OCI-LY7 (cell line): ENCODE measurements at regions of chr10 and their contacts with region 1.

Region 1: GRCh38 chr10:99845837-99846382 is 63.5 kb downstream of the ABCC2 start:
- DNase-seq: peak; percentile 90
- H3K4me3 ChIP-seq: no peak overlapping the region
- H3K27ac ChIP-seq: no peak overlapping the region
- H3K4me1 ChIP-seq: peaks cover 5% of the 10 kb centered on the region
- CTCF ChIP-seq: peak; percentile 98

Region 2: DNA sequence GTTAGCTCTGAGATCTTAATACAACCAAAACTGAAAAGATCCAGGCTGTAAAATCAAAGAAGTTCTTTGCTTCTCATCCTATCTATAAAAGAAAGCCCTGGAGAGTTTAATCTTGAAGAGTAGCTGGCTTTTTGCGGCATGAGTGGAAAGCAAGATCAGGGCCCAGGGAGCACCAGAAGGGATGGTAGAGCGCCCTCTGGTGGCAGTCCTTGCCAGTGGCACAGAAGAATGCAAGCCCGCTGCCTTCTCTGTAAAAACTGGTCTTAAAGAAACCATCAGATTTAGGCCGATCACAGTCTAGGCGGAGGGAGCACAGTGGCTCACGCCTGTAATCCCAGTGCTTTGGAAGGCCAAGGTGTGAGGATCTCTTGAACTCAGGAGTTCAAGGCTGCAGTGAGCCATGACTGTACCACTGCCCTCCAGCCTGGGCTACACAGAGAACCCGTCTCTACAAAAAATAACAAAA is 200.1 kb after region 1 on chr10:
- CTCF ChIA-PET with region 1: interaction called, 7 read pairs
- POLR2A ChIA-PET with region 1: interaction called, 3 read pairs
- intact Hi-C with region 1: loop called (anchors 1 kb)
- DNase-seq: peak; percentile 92
- H3K4me3 ChIP-seq: no peak overlapping the region
- H3K27ac ChIP-seq: no peak overlapping the region
- H3K4me1 ChIP-seq: peaks cover 49% of the 10 kb centered on the region
- CTCF ChIP-seq: peak; percentile 97

Region 3: DNA sequence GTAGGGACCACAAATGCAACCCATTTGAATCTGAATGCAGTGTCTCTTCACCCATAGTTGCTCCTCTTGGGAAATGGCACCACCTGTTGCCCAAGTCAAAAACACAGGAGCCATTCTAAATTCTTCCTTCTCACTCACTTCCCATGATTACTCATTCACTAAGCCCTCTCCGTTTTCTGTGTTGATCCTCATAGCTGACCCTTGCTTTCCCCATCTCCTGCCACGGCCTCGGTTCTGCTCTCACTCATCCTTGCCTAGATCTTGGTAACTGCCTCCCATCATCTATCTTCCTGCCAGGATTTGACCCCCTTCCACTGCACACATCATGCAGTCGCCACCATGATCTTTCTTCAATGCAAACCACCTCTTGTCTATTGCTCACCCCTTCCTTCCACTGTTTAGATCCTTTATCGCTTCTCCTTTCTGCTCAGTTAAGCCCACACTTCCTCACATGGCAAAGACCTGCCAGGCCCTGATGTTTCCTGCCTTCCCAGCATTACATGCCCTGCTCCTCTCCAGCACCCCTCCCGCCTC is 254.8 kb after region 1 on chr10:
- CTCF ChIA-PET with region 1: no interaction called
- POLR2A ChIA-PET with region 1: no interaction called
- intact Hi-C with region 1: loop called (anchors 1 kb)
- DNase-seq: peak; percentile 22
- H3K4me3 ChIP-seq: no peak overlapping the region
- H3K27ac ChIP-seq: no peak overlapping the region
- H3K4me1 ChIP-seq: no peaks in the 10 kb centered on the region
- CTCF ChIP-seq: peak; percentile 71

Region 4: GRCh38 chr10:100239851-100240250 is 393.9 kb after region 1 on chr10:
- CTCF ChIA-PET with region 1: no interaction called
- POLR2A ChIA-PET with region 1: no interaction called
- intact Hi-C with region 1: loop called (anchors 5 kb)
- DNase-seq: no peak
- H3K4me3 ChIP-seq: no peak overlapping the region
- H3K27ac ChIP-seq: no peak overlapping the region
- H3K4me1 ChIP-seq: no peaks in the 10 kb centered on the region
- CTCF ChIP-seq: no peak

Region 5: GRCh38 chr10:100518761-100519241 is 672.9 kb after region 1 on chr10:
- CTCF ChIA-PET with region 1: no interaction called
- POLR2A ChIA-PET with region 1: no interaction called
- intact Hi-C with region 1: loop called (anchors 10 kb)
- DNase-seq: peak; percentile 51
- H3K4me3 ChIP-seq: no peak overlapping the region
- H3K27ac ChIP-seq: no peak overlapping the region
- H3K4me1 ChIP-seq: no peaks in the 10 kb centered on the region
- CTCF ChIP-seq: peak; percentile 92